Left cardiac atrium (tissue), 4 donors: ENCODE measurements at regions of chr9 and their contacts with region 1.

Region 1: GRCh38 chr9:14353222-14354056 is 39.5 kb upstream of the NFIB start:
- DNase-seq: peak; percentile 95
- ATAC-seq: peak; percentile 76

Region 2: DNA sequence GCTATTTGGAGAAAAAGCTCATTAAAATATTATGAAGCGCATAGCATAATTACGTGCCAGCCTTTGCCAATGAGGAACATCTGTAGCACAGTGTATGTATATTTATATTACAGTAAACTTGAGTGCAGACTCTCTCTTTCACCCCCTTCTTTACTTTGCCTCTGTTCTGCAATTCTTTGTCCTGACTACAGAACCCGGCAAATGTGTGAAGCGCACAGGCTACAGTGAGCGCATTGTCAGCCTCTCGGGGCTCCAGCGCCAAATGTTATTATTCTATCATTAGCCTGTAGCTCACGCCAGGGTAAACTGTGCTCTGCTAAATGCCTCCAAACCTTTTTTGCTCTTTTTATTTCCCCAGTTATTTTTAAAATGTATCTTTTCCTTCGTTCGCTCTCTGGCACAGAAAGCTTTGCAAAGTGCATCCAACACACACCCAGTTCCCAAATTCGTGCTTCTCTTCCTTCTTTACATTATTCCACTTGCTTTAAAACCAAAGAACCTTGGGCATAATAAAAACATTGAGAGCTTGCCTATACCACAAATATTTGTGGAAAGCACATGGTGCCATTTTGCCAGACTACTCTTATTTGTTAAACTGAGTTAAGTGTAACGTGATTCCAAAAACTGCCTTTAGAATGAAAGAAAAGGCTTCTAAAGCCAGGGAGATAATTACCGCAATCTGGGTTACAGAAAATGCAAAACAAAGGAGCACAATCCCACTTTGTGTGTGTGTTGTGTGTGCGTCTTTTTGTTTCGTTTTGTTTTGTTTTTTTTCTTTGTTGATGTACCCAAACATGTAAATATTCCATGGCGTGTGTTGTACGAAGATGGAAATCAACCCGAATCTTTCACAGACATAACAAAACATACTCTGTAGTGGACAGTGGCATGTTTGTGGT is 909.8 kb before region 1 on chr9:
- intact Hi-C with region 1: loop called in 1 of 2 experiments (anchors 5 kb)
- DNase-seq: no peak
- ATAC-seq: peak; percentile 56 to 58

Region 3: GRCh38 chr9:14170973-14171596 is 182.4 kb before region 1 on chr9:
- intact Hi-C with region 1: no loop called
- DNase-seq: no peak
- ATAC-seq: no peak

Region 4: GRCh38 chr9:14645648-14646047 is 292.2 kb after region 1 on chr9:
- intact Hi-C with region 1: no loop called
- DNase-seq: no peak
- ATAC-seq: no peak